PC-9 (cell line): ENCODE measurements at regions of chr5 and their contacts with region 1.

Region 1: GRCh38 chr5:42950440-42951292 is 89.5 kb downstream of the ANXA2R start:
- DNase-seq: peak; percentile 97 to 100
- H3K4me3 ChIP-seq: peak overlapping the region; percentile 55
- H3K27ac ChIP-seq: peak overlapping the region; percentile 96
- H3K4me1 ChIP-seq: peaks cover 28% of the 10 kb centered on the region
- H3K27me3 ChIP-seq: no peaks in the 10 kb centered on the region
- CTCF ChIP-seq: no peak

Region 2: DNA sequence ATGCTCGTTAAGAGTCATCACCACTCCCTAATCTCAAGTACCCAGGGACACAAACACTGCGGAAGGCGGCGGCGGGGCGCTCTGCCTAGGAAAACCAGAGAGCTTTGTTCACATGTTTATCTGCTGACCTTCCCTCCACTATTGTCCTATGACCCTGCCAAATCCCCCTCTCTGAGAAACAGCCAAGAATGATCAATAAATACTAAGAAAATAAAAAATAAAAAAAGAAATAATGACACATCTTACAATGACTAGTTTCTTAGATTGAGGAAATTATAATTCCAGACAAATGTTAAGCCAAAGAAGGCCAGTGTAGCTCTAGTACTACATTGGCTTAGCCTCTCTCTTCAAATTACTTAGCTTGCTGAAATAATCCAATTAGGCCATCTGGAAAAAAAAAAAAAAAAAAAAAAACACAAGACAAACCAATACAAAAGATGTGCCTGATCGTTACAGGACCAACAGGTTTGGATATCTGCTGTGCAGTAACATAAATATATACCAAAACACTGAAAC is 31.5 kb after region 1 on chr5:
- CTCF ChIA-PET with region 1: no interaction called
- POLR2A ChIA-PET with region 1: interaction called, 4 read pairs
- intact Hi-C with region 1: loop called (anchors 1 kb)
- DNase-seq: peak in 1 of 2 experiments; percentile 54
- H3K4me3 ChIP-seq: 0 out of 2 replicates have a peak overlapping the region, but pooled peaks have one; percentile 5
- H3K27ac ChIP-seq: peak overlapping the region; percentile 70
- H3K4me1 ChIP-seq: peaks cover 51% of the 10 kb centered on the region
- H3K27me3 ChIP-seq: no peaks in the 10 kb centered on the region
- CTCF ChIP-seq: no peak

Region 3: DNA sequence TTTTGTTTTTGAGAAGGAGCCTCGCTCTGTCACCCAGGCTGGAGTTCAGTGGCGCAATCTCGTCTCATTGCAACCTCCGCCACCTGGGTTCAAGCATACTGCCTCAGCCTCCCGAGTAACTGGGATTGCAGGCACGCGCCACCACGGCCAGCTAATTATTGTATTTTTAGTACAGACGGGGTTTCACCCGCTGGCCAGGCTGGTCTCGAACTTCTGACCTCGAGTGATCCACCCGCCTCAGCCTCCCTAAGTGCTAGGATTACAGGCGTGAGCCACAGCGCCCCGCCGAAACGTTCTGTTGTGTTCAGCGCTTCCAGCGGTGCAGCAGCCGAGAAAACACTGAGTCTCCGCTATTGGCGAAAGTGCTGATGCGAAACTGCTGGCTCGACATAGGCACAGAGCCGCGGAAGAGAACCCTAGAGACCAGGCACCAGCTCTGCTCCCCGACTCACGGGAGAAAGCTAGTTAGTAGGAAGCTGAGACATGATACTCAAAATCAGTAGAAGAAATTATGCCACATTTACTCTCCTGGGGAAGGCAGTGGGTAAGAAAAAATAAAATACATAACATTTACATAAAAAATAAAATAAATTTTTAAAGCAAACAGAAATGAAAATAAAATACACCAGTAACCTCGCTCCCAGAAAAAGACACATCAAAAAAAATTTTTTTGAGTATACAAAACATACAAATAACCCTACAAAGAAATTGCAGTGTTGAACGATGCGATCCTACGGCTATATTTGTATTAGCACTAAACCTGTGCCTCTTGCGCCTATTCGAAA is 57.9 kb after region 1 on chr5:
- CTCF ChIA-PET with region 1: interaction called, 6 read pairs
- POLR2A ChIA-PET with region 1: interaction called, 23 read pairs
- intact Hi-C with region 1: loop called (anchors 1 kb)
- DNase-seq: peak; percentile 94 to 98
- H3K4me3 ChIP-seq: peak overlapping the region; percentile 58
- H3K27ac ChIP-seq: peak overlapping the region; percentile 85
- H3K4me1 ChIP-seq: peaks cover 15% of the 10 kb centered on the region
- H3K27me3 ChIP-seq: no peaks in the 10 kb centered on the region
- CTCF ChIP-seq: peak; percentile 18; the same call in 1 of the 2 replicates

Region 4: DNA sequence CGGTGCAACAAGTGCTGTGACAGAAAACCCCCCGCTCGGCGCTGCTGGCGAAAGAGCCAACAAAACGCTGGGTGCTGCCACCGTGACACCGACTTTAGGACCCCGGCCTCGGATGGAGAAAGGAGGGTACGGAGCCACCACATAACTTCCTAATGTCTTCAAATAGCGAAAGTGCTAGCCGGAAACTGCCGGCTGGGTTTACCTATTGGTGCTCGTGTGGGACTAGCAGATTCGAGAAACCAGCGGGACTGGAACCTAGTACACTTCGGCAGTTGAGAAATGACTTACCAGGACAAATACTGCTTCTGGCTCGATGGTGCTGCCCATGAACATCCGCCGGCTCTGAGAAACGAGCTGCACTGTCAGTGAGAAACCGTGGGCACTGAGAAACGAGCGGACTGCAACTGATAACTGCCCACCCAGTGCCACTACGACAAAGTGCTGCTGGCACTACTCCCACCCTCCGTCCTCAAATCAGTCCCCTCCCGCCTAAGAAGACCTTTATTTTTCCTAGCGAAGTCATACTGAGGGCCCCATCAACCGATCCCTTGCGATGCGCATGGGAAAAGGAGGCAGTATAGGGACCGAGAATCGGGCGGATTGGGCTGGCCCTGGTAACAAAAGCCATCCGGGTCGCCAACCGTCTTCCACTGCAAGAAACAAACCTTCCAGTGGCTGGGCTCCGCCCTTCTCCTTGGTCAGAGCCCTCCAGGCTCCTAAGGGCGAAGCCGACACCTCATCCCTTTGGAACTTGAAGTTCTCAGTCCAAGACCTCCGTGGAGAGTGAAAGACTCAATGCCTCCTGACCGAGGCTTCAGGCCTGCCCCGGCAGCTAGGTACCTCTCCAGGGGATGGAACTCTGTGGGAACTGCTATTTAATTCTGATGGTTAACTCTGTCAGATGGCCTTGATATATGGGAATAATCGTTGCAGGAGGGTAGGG is 116.4 kb after region 1 on chr5:
- CTCF ChIA-PET with region 1: interaction called, 3 read pairs
- POLR2A ChIA-PET with region 1: no interaction called
- intact Hi-C with region 1: loop called (anchors 1 kb)
- DNase-seq: peak; percentile 91 to 93
- H3K4me3 ChIP-seq: peak overlapping the region; percentile 75
- H3K27ac ChIP-seq: peak overlapping the region; percentile 84
- H3K4me1 ChIP-seq: peaks cover 27% of the 10 kb centered on the region
- H3K27me3 ChIP-seq: no peaks in the 10 kb centered on the region
- CTCF ChIP-seq: no peak

Region 5: GRCh38 chr5:43367909-43368648 is 417.4 kb after region 1 on chr5:
- CTCF ChIA-PET with region 1: no interaction called
- POLR2A ChIA-PET with region 1: no interaction called
- intact Hi-C with region 1: no loop called
- DNase-seq: no peak
- H3K4me3 ChIP-seq: no peak overlapping the region
- H3K27ac ChIP-seq: no peak overlapping the region
- H3K4me1 ChIP-seq: no peaks in the 10 kb centered on the region
- H3K27me3 ChIP-seq: no peaks in the 10 kb centered on the region
- CTCF ChIP-seq: no peak

Region 6: GRCh38 chr5:43389679-43390329 is 439.1 kb after region 1 on chr5:
- CTCF ChIA-PET with region 1: no interaction called
- POLR2A ChIA-PET with region 1: interaction called, 11 read pairs
- intact Hi-C with region 1: no loop called
- DNase-seq: peak; percentile 73 to 91
- H3K4me3 ChIP-seq: no peak overlapping the region
- H3K27ac ChIP-seq: no peak overlapping the region
- H3K4me1 ChIP-seq: 0 out of 2 replicates have a peak, but pooled peaks cover 5% of the 10 kb centered on the region
- H3K27me3 ChIP-seq: no peaks in the 10 kb centered on the region
- CTCF ChIP-seq: peak; percentile 99